Naive thymus-derived CD8-positive, alpha-beta T cell (primary cell): ENCODE measurements at regions of chr20 and their contacts with region 1.

Region 1: GRCh38 chr20:62926239-62927104 is at the start of gene DIDO1:
- DNase-seq: peak; percentile 77 to 92 (median 86)
- ATAC-seq: peak; percentile 79 to 84
- H3K4me3 Mint-ChIP-seq: peak within 1 kb of the TSS; percentile 91 to 98 (median 95)
- H3K27ac Mint-ChIP-seq: peak within 1 kb of the TSS; percentile 87 to 97 (median 95)
- H3K4me1 Mint-ChIP-seq: peaks cover 40 to 82% (median 72%) of the 10 kb centered on the region in 4 donors
- H3K27me3 Mint-ChIP-seq: no peaks in the 10 kb centered on the region
- polyA plus RNA-seq, gene DIDO1: 26.8 to 45.8 (median 39.7) TPM

Region 2: DNA sequence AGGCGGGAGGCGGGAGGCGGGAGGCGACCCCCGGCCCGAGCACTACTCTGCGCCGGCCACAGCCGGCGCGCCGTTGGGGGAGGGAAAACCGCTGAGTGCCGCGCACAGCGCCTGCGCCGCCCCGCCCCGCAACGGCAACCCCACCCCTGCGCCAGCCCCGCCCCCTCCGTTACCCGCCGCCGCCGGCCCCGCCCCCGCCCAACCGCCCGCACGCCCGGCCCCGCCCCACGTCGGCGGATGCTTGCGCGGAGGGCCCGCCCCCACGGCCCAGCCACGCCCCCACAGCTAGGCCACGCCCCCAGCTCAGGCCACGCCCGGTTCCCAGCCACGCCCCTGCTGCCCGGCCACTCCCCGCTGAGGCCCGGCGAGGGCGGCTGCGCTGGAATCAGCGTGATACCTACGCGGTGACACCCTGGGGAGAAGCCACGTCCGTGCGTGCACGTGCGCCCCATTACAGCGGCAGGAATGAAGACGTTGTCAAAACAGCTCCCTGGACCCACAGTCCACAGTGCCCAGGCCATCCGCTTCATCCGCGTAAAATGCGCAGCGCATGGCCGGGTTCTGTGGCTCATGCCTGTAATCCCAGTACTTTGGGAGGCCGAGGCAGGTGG is 64.6 kb before region 1 on chr20 and contains the start of gene TCFL5:
- POLR2A ChIA-PET with region 1: interaction called, 13 read pairs
- DNase-seq: peak; percentile 85 to 98 (median 94)
- ATAC-seq: peak; percentile 80 to 87
- H3K4me3 Mint-ChIP-seq: peak within 1 kb of the TSS; percentile 54 to 88 (median 72)
- H3K27ac Mint-ChIP-seq: peak within 1 kb of the TSS in 9 of 10 donors; percentile 37 to 94 (median 87)
- H3K4me1 Mint-ChIP-seq: peaks cover 9 to 29% (median 22%) of the 10 kb centered on the region in 4 donors
- H3K27me3 Mint-ChIP-seq: no peaks in the 10 kb centered on the region
- polyA plus RNA-seq, gene TCFL5: 1.0 to 2.1 (median 1.5) TPM

Region 3: DNA sequence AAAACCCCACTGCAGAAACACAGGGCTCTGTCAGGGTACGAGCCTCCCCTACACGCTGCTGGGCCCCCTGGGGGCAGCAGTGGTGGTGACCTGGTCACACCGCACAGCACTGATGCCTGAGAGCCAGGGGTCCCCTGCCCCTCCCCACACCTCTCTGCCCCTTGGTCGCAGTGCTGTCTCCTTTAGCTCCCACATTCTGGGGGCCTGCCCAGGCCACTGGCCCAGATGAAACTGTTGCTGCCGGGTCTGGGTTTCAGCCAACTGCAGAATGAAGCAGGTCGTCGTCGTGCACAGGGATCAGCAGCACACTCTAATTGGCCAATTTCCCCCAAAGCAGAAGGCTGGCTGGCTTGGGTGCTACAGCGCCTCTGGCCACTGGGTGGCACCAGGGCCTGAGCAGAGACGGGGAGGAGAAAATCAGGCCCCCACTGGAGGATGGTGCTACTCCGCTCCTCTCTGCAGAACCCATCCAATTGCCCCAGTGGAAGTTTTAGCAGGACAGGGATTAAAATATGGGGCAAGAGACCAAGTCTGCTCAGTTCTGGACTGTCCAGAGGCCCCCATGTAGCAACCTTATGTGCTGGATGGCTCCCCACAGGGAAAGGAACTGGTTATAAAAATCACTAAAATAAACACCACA is 26.3 kb before region 1 on chr20:
- POLR2A ChIA-PET with region 1: interaction called, 13 read pairs
- DNase-seq: peak; percentile 63 to 87 (median 77)
- ATAC-seq: peak; percentile 88 to 93
- H3K4me3 Mint-ChIP-seq: peak overlapping the region in 9 of 10 donors; percentile 54 to 85 (median 76)
- H3K27ac Mint-ChIP-seq: peak overlapping the region; percentile 33 to 96 (median 91)
- H3K4me1 Mint-ChIP-seq: peaks cover 18 to 40% (median 34%) of the 10 kb centered on the region in 4 donors
- H3K27me3 Mint-ChIP-seq: no peaks in the 10 kb centered on the region

Region 4: DNA sequence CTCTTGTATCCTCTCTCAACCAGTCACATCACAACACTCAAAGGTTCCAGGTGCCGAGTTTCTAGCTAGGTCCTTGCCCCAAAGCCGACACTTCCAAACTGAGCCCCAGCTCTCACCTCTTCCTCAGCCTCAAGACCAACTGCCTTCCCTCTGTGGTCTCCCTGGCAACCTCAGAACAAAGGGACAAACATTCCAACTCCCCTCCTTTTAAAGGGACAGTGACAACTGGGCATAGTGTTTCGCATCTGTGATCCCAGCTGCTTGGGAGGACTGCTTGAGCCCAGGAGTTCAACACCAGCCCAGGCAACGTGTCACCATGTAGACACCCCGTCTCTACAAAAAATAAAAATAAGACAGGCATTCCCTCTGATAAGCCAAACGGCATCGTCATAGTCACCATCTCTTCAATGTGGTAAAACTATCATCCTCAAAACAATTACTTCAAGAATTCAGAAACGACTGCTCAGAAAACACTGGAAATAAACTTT is 11.5 kb before region 1 on chr20:
- POLR2A ChIA-PET with region 1: interaction called, 71 read pairs
- DNase-seq: peak in 6 of 10 donors; percentile 40 to 53 (median 48)
- ATAC-seq: peak; percentile 36 to 48
- H3K4me3 Mint-ChIP-seq: peak overlapping the region; percentile 59 to 85 (median 78)
- H3K27ac Mint-ChIP-seq: peak overlapping the region; percentile 81 to 97 (median 94)
- H3K4me1 Mint-ChIP-seq: peaks cover 38 to 83% (median 82%) of the 10 kb centered on the region in 4 donors
- H3K27me3 Mint-ChIP-seq: no peaks in the 10 kb centered on the region

Region 5: DNA sequence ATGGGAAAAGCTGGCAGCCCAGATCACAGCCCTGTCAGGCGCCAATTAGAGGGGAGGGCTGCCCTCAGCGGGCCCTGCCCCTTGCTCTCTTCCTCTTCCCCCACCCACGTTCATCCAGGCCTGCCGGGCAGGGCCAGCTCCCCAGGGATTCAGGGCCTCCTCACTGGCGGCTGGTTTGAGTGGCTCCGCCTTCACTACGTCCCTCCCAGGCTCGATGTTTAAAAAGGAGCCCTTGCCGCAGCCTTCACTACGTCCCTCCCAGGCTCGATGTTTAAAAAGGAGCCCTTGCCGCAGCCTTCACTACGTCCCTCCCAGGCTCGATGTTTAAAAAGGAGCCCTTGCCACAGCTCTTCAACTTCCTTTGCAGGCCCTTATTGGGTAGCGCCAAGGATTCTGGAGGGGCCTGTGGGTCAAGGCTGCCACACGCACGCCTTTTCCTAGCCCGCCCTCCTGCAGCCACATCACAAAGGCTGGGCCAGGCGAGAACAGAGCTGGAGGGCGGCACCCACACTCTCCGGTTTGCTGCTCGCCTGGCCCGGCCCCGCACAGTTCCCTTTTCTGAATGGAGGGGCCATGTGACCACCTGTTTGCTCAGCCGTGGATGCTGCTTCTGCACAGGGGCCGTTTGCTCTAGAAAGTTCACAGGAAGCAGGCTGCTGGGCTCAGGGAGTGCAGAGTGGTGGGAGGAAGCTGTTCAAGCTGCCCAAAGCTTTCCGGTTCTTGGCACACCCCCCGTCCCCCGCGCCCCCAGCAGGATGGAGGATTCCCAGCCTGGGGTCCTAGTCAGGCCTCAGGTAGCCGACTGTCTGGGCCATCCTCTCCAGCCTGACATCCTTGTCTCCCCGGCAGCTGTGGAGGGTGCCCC is 27.6 kb after region 1 on chr20:
- POLR2A ChIA-PET with region 1: interaction called, 54 read pairs
- DNase-seq: peak; percentile 59 to 92 (median 80)
- ATAC-seq: peak; percentile 89 to 90
- H3K4me3 Mint-ChIP-seq: peak overlapping the region; percentile 76 to 92 (median 88)
- H3K27ac Mint-ChIP-seq: peak overlapping the region; percentile 88 to 97 (median 95)
- H3K4me1 Mint-ChIP-seq: peaks cover 13 to 67% (median 38%) of the 10 kb centered on the region in 4 donors
- H3K27me3 Mint-ChIP-seq: no peaks in the 10 kb centered on the region